Endothelial cell of umbilical vein (primary cell): ENCODE measurements at regions of chr6 and their contacts with region 1.

Region 1: GRCh38 chr6:28281288-28282064 is at the start of gene PGBD1:
- DNase-seq: peak; percentile 77
- H3K4me3 ChIP-seq: peak within 1 kb of the TSS; percentile 68 to 96 (median 93)
- H3K27ac ChIP-seq: peak within 1 kb of the TSS; percentile 46
- H3K4me1 ChIP-seq: peaks cover 7% of the 10 kb centered on the region
- H3K27me3 ChIP-seq: no peaks in the 10 kb centered on the region
- CTCF ChIP-seq: no peak
- POLR2A ChIP-seq: peak; percentile 81
- total RNA-seq, gene PGBD1: 9.6 and 10.1 TPM in 2 replicates

Region 2: GRCh38 chr6:28080631-28081485 is 200.6 kb before region 1 on chr6:
- CTCF ChIA-PET with region 1: no interaction called
- POLR2A ChIA-PET with region 1: no interaction called
- dilution Hi-C with region 1: no loop called
- intact Hi-C with region 1: loop called (anchors 5 kb)
- DNase-seq: peak; percentile 97
- H3K4me3 ChIP-seq: peak overlapping the region; percentile 1 to 73 (median 64)
- H3K27ac ChIP-seq: peak overlapping the region; percentile 87
- H3K4me1 ChIP-seq: peaks cover 9% of the 10 kb centered on the region
- H3K27me3 ChIP-seq: no peaks in the 10 kb centered on the region
- CTCF ChIP-seq: no peak
- POLR2A ChIP-seq: peak; percentile 36

Region 3: DNA sequence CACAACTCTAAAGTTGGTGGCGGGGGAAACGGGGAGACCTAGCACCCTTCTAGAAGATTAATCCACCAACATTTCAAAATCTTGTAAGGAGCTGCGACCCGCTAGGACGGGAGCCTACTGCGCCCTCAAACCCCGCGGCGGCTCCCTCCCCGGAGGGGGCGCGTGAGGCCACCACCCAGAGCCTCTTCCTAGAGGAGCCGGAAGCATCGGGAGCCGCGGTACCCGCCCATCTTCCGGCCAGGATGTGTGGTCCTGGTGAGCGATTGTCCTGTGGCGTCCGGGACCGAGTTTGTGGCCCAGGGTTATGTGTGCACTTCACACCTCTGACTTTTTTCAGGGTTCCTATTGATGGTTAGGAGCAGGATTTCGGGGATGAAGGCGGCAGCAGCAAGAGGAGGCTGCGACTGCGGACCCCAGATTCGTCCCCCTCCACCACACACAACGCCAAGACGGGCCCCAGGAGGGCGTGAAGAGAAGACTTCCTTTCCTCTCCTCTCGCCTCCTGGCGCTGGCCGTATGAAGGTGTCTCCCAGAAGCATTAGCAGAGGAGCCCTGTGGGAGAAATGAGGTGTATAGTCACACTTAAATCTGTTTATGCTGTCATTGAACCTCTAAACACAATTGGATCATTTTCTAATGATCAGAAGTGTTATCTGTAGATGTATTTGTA is 190.4 kb before region 1 on chr6:
- CTCF ChIA-PET with region 1: no interaction called
- POLR2A ChIA-PET with region 1: no interaction called
- dilution Hi-C with region 1: no loop called
- intact Hi-C with region 1: no loop called
- DNase-seq: no peak
- H3K4me3 ChIP-seq: no peak overlapping the region
- H3K27ac ChIP-seq: no peak overlapping the region
- H3K4me1 ChIP-seq: no peaks in the 10 kb centered on the region
- H3K27me3 ChIP-seq: peaks cover 5 to 7% of the 10 kb centered on the region in 2 experiments
- CTCF ChIP-seq: no peak
- POLR2A ChIP-seq: no peak

Region 4: GRCh38 chr6:28252009-28252975 is 29.2 kb before region 1 on chr6 and contains the start of gene ZKSCAN4:
- CTCF ChIA-PET with region 1: interaction called, 8 read pairs
- POLR2A ChIA-PET with region 1: interaction called, 3 read pairs
- dilution Hi-C with region 1: no loop called
- intact Hi-C with region 1: loop called (anchors 1 kb)
- DNase-seq: peak; percentile 83
- H3K4me3 ChIP-seq: peak within 1 kb of the TSS; percentile 85 to 89 (median 85)
- H3K27ac ChIP-seq: no peak within 1 kb of the TSS
- H3K4me1 ChIP-seq: peaks cover 12% of the 10 kb centered on the region
- H3K27me3 ChIP-seq: no peaks in the 10 kb centered on the region
- CTCF ChIP-seq: no peak
- POLR2A ChIP-seq: no peak
- total RNA-seq, gene ZKSCAN4: 3.6 and 4.1 TPM in 2 replicates

Region 5: DNA sequence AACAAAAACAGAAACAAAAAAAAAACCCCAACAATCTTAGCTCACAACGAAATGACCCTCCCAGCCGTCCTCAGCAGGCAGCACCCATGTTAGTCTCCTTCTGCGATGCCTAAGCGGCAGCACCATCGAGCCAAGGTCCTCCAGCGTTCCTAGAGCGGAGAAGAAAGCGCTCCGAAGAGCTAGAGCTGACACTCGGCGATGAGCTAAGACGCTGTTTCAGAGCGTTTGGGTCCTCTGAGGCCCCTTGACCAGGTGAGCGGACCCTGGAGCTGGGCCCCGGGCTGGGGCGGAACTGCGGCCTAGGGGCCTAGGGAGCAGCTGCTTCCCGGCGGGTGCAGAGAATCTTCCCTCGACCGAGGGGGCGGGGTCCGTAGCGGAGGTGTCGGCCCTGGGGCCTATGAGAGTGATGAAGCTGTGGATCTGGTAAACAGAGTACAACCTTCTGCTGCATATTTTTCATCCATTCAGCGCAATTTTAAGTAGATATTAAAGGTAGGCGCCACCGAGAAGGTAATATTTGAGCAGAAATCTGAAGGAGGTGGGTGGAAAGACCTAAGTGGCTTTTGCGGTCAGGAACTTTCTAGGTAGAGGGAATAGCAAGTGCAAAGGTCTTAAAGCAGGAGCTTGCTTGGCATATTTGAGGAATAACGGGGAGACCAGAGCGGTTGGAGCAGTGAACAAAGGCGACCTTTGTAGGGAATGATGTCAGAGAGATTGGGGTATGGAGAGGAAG is 14.3 kb before region 1 on chr6 and contains the start of gene ZSCAN26:
- CTCF ChIA-PET with region 1: interaction called, 5 read pairs
- POLR2A ChIA-PET with region 1: interaction called, 6 read pairs
- dilution Hi-C with region 1: no loop called
- intact Hi-C with region 1: loop called (anchors 2 kb)
- DNase-seq: peak; percentile 92
- H3K4me3 ChIP-seq: peak within 1 kb of the TSS; percentile 73 to 96 (median 85)
- H3K27ac ChIP-seq: peak within 1 kb of the TSS; percentile 71
- H3K4me1 ChIP-seq: peaks cover 35% of the 10 kb centered on the region
- H3K27me3 ChIP-seq: peaks cover 0 to 3% of the 10 kb centered on the region in 2 experiments
- CTCF ChIP-seq: no peak
- POLR2A ChIP-seq: peak; percentile 81
- total RNA-seq, gene ZSCAN26: 12.7 and 14.1 TPM in 2 replicates

Region 6: DNA sequence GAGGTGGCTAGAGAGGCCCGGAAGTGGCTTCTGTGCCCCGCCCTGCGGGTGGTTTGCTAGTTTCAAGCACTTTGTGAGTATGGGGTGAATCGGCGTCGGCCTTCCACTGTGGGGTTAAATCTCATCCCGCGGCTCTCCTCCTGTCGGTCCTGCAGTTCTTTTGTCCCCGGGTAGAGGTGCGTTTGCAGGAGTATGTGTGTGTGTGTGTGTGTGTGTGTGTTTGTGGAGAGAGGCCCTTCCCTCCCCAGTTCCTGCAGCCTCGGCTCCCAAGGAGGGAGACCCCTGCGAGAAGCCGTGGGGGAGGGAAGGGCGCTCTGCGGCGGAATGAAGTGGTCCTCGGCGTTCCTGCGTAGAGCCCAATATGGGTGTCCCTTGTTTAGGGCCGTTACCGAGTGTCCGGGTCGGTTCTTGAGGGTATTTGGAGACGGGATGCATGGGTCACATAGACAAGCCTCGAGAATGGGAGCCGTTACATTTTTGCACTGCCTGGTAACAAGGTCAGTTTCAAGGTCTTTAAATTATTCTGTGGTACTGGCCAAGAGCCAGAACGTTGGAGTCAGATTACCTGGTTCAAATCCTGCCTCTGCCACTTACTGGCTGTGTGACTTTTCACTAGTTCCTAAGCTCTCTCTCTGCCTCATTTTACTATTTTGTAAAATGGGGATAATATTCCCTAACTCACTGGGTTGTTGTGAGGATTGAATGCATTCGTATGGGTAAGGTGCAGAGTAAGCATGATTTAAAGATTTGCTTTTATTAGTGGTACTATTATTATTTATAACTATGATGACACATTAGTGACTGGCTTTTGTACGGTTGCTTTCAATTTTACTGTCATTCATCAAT is 68.6 kb after region 1 on chr6 and contains the start of gene ZKSCAN3:
- CTCF ChIA-PET with region 1: interaction called, 19 read pairs
- POLR2A ChIA-PET with region 1: no interaction called
- dilution Hi-C with region 1: no loop called
- intact Hi-C with region 1: loop called (anchors 2 kb)
- DNase-seq: peak; percentile 76
- H3K4me3 ChIP-seq: peak within 1 kb of the TSS; percentile 80 to 89 (median 86)
- H3K27ac ChIP-seq: peak within 1 kb of the TSS; percentile 60
- H3K4me1 ChIP-seq: peaks cover 24% of the 10 kb centered on the region
- H3K27me3 ChIP-seq: no peaks in the 10 kb centered on the region
- CTCF ChIP-seq: no peak
- POLR2A ChIP-seq: peak; percentile 85
- total RNA-seq, gene ZKSCAN3: 4.9 and 6.9 TPM in 2 replicates